ENCODE measurements at regions of chr9 and their contacts with region 1.

Region 1: DNA sequence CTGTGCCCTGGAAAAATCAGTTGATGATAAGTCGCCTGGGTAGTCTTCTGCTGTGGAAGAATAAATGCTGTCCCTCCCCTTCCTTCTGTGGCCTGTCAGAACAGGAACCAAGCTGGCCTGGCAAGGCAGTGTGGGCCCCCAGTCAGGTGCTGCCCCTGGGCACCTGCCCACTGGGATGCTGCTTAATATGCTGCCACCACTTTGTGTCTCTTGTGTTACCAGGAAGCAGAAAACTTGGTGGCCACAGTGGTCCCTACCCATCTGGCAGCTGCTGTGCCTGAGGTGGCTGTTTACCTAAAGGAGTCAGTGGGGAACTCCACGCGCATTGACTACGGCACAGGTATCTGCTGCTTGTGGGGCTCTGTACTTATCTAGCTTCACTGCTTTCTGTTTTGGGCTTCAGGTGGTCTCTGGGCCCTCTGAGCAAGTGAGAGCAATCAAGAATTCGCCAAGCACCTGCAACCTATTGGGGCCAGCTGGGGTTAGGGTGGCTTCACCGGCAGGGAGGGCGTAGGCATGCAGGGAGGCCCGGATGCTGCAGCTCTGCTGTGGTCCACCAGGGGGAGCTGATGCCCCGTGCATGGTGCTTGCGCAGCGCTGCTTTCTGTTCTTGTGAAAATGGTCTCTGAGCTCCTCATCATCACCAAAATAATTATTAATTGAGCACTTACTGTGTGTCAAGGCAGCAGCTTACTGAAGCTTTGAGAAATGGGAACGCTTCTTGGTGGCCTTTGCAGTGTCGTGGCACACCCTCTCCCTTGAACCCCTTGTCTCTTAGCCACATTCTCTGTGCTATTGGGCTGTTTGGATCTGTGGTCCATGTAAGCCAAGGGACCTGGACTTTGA is 20.3 kb downstream of the PTPA start:
- DNase-seq: peak; percentile 89
- H3K4me3 Mint-ChIP-seq: no peak overlapping the region
- H3K27ac Mint-ChIP-seq: no peak overlapping the region
- H3K4me1 Mint-ChIP-seq: peaks cover 4% of the 10 kb centered on the region
- H3K27me3 Mint-ChIP-seq: no peaks in the 10 kb centered on the region

Region 2: DNA sequence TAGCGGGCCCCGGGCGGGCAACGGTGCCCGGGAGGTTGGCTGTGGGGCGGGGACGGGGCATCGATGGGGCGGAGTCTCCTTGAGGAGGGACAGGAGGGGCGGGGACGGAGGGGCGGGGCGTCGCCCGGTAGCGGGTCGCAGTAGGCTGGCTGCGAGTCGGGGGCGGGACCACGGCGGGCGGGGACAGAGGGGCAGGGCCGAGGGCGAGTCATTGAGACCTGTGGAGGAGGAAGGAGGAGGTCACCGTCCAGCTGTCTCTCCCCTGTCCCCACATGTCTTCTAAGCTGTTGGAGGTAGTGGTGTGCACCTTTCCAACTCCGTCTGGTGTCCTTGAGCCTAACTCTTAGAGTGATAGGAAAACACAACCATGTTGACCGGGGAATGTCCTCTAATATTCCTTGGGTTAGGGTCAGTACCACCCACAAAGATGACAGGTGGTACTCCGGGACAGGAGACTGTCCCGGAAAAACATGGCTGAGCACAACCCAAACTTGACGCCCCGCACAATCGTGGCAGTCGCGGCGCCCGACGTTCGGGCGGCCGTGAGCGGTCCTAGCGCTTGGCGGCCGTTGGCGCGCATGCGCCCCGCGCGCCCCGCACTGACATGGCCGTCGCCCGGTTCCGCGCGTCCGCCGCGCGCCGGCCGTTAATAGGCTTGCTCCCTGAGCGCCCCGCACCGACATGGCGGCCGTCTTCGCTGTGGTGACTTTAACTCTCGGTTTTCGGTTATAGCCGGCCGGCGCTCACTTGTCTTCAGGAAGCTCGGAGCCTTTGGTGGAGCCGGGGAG is 20.6 kb before region 1 on chr9 and contains the starts of genes CRAT and PTPA:
- CTCF ChIA-PET with region 1: interaction called, 39 read pairs
- POLR2A ChIA-PET with region 1: interaction called, 7 read pairs
- intact Hi-C with region 1: no loop called
- DNase-seq: peak; percentile 98
- H3K4me3 Mint-ChIP-seq: peak within 1 kb of the TSS; percentile 94
- H3K27ac Mint-ChIP-seq: peak within 1 kb of the TSS; percentile 97
- H3K4me1 Mint-ChIP-seq: peaks cover 34% of the 10 kb centered on the region
- H3K27me3 Mint-ChIP-seq: no peaks in the 10 kb centered on the region
- total RNA-seq, gene CRAT: 16.0 to 16.4 TPM
- total RNA-seq, gene PTPA: 74.6 to 76.3 TPM

Region 3: GRCh38 chr9:129320575-129321263 is 189.2 kb after region 1 on chr9:
- CTCF ChIA-PET with region 1: interaction called, 13 read pairs
- POLR2A ChIA-PET with region 1: no interaction called
- intact Hi-C with region 1: no loop called
- DNase-seq: peak; percentile 63
- H3K4me3 Mint-ChIP-seq: peak overlapping the region; percentile 57
- H3K27ac Mint-ChIP-seq: no peak overlapping the region
- H3K4me1 Mint-ChIP-seq: peaks cover 12% of the 10 kb centered on the region
- H3K27me3 Mint-ChIP-seq: no peaks in the 10 kb centered on the region

Region 4: DNA sequence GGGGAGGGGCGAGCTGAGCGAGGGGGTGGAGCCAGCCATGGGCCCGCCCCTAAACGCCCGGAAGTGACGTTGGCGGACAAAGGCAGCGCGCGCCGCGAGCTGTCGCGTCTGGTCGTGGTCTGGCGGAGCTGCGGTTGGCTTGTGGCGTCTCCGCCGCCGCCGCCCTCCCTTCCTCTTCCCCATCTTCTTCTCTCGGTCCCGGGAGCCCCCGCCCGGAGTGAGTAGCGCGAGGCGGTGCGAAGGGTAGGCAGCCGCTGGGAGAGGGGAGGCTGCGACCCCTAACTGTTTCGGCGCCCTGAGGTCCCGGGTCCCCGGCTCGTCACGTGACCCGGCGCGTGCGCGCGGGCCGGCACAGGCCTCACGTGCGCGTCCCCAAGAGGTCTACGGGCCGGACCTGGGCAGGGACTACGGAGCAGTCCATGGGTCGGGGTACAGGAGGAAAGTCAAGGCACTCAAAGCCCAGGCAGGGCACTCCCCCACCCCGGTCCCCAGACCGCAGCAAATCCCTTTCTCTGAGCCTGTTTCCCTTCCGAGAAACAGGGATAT is 494.6 kb after region 1 on chr9 and contains the start of gene NTMT1:
- CTCF ChIA-PET with region 1: interaction called, 129 read pairs
- POLR2A ChIA-PET with region 1: interaction called, 3 read pairs
- intact Hi-C with region 1: no loop called
- DNase-seq: peak; percentile 95
- H3K4me3 Mint-ChIP-seq: peak within 1 kb of the TSS; percentile 77
- H3K27ac Mint-ChIP-seq: peak within 1 kb of the TSS; percentile 91
- H3K4me1 Mint-ChIP-seq: peaks cover 58% of the 10 kb centered on the region
- H3K27me3 Mint-ChIP-seq: peaks cover 9% of the 10 kb centered on the region
- total RNA-seq, gene NTMT1: 59.9 to 64.6 TPM

Measured in activated CD4-positive, alpha-beta memory T cell treated with anti-CD3 and anti-CD28 coated beads for 36 hours (primary cell).